ENCODE measurements at regions of chr7 and their contacts with region 1.

Region 1: GRCh38 chr7:38942431-38943051 is 33.5 kb upstream of the VPS41 start:
- DNase-seq: no peak

Region 2: DNA sequence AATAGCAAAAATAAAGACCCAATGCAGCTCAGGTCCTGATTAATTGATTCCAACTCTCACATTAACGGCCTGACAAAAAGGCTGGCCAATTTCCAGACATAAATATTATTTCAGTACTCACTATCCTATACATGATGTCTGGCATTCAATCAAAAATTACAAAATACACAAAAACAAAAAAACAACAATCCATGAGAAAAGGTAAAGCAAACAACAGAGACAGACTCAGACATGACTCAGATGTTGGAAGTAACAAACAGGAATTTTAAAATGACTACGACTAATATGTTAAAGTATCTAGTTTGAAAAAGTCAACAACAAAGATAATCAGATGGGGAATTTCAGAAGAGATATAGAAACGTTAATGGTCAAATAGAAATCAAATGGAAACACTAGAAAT is 464.1 kb before region 1 on chr7:
- intact Hi-C with region 1: no loop called
- DNase-seq: no peak

Region 3: GRCh38 chr7:39259391-39260003 is 317.0 kb after region 1 on chr7:
- intact Hi-C with region 1: loop called (anchors 5 kb)
- DNase-seq: peak in 1 of 10 donors; percentile 53